Astrocyte of the cerebellum (primary cell): ENCODE measurements at regions of chr1 and their contacts with region 1.

Region 1: DNA sequence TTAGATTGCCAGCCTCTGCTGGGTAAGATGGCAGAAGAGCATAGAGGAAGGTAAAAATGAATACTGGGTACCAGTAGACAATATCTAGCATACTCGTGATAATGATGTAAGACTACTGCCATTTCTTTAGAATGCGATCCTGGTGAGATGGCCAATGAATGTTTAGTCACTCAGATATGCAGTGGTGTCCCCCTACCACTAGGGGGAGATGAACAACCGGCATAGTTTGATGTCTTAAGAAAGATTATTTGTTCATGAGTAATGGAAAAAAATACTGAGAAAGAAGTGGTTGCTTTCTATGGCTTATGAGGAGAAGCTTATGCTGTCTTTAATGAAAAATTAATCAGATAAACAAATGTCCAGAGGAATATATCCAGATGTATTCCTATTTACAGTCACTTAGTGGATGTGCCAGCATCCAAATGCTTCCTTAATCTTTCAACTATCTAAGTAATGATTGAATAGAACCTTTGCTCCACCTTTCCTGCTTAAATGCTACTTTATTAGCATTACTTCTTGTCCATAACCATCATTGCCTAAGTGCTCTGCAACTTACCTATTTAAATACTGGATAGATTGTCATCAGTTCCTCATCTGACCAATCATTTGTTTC is 256.6 kb downstream of the ST6GALNAC3 start:
- DNase-seq: peak; percentile 69
- H3K4me3 ChIP-seq: no peak overlapping the region
- CTCF ChIP-seq: peak; percentile 94

Region 2: GRCh38 chr1:77134359-77134758 is 803.3 kb after region 1 on chr1:
- in situ Hi-C with region 1: loop called (anchors 10 kb)
- DNase-seq: no peak
- H3K4me3 ChIP-seq: no peak overlapping the region
- CTCF ChIP-seq: no peak